ENCODE measurements at regions of chr1 and their contacts with region 1.

Region 1: DNA sequence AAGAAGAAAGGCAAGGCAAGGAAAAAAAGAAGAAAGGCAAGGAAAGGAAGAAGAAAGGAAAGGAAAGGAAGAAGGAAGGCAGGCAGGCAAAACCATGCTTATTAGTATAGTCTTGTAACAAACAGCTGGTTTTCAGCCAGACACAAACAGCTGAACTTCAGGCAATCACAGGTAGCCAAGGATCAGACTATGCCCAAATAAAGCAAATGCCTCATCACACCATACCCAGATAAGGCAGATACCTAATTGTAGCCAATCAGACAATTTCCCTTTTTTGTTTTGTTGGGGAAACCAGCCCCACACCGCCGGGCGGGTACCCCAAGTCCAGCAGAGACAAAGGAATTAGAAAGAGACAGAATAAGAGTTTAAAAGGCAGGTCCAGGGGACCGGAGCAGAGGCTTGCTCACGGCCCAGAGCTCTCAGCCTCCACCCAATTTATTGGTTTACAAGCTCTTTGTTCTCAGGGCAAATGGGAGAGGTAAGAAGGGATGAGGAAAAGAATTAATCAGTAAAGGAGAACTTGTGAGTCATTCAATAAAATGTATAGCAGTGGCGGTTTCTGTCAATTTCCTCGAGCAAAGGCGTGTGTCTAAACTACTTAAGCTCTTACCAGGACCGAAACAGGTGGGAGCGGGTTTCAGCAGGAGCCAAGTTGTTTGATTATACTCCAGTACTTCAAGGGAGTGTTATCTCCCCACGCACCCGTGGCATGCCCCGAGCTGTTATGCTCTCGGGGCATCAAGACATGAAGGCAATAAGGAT is 886.8 kb downstream of the KCNT2 start:
- DNase-seq: no peak
- ATAC-seq: no peak
- H3K4me3 ChIP-seq: no peak overlapping the region
- H3K27ac ChIP-seq: no peak overlapping the region
- H3K4me1 ChIP-seq: no peaks in the 10 kb centered on the region
- H3K27me3 ChIP-seq: no peaks in the 10 kb centered on the region
- CTCF ChIP-seq: no peak
- POLR2A ChIP-seq: no peak

Region 2: DNA sequence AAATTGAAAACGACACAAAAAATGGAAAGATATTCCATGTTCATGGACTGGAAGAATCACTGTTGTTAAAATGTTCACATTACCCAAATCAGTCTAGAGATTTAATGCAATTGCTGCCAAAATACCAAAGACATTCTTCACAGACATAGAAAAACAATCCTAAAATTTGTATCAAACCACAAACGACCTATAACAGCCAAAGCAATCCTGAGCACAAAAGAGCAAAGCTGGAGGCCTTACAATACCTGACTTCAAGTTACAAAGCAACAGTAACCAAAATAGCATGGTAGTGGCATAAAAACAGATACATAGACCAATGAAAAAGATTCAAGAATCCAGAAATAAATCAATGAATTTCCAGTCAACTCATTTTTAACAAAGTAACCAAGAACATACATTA is 190.4 kb before region 1 on chr1:
- intact Hi-C with region 1: no loop called
- DNase-seq: no peak
- ATAC-seq: no peak
- H3K4me3 ChIP-seq: no peak overlapping the region
- H3K27ac ChIP-seq: no peak overlapping the region
- H3K4me1 ChIP-seq: no peaks in the 10 kb centered on the region
- H3K27me3 ChIP-seq: no peaks in the 10 kb centered on the region
- CTCF ChIP-seq: no peak
- POLR2A ChIP-seq: no peak

Region 3: DNA sequence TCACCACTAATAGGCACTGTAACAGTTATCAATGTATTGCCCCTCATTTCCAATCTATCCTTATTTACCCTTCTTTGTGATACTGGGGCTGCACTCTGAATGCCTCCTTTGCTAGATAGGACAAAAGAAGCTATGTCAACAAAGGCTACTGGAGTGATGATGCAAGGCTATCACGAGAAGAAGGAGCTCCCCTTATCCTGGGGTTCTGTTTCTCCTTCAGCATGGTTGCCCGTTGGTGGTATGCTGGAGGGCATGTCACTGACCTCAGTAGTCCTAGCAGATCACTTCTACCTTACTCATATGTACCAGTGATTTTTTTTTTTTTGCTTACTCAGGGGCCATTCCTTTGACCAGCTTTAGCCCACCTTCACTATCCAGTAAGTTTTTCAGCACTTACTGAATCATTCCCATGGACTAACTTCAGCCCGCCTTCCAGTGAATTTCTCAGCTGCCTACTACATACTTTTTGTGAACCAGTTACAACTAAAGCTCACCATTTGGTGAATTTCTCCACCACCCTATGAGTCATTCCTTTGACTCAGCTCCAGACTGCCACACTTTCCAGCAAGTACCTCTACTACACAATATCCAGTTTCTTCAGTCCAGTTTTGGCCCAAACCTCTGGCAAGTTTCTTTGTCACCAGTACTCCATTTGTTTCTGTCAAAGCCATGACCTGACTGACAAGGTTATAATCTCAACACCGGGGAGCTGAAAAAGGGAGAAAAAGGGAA is 57.7 kb before region 1 on chr1:
- intact Hi-C with region 1: loop called in 1 of 10 experiments (anchors 10 kb)
- DNase-seq: no peak
- ATAC-seq: no peak
- H3K4me3 ChIP-seq: no peak overlapping the region
- H3K27ac ChIP-seq: no peak overlapping the region
- H3K4me1 ChIP-seq: no peaks in the 10 kb centered on the region
- H3K27me3 ChIP-seq: no peaks in the 10 kb centered on the region
- CTCF ChIP-seq: no peak
- POLR2A ChIP-seq: no peak

Region 4: GRCh38 chr1:196034080-196034706 is 312.8 kb after region 1 on chr1:
- intact Hi-C with region 1: no loop called
- DNase-seq: no peak
- ATAC-seq: no peak
- H3K4me3 ChIP-seq: no peak overlapping the region
- H3K27ac ChIP-seq: no peak overlapping the region
- H3K4me1 ChIP-seq: no peaks in the 10 kb centered on the region
- H3K27me3 ChIP-seq: no peaks in the 10 kb centered on the region
- CTCF ChIP-seq: no peak
- POLR2A ChIP-seq: no peak

Region 5: GRCh38 chr1:196071447-196071846 is 350.1 kb after region 1 on chr1:
- intact Hi-C with region 1: no loop called
- DNase-seq: no peak
- ATAC-seq: no peak
- H3K4me3 ChIP-seq: no peak overlapping the region
- H3K27ac ChIP-seq: no peak overlapping the region
- H3K4me1 ChIP-seq: no peaks in the 10 kb centered on the region
- H3K27me3 ChIP-seq: no peaks in the 10 kb centered on the region
- CTCF ChIP-seq: no peak
- POLR2A ChIP-seq: no peak

Measured in heart left ventricle (tissue), 16 donors.